ENCODE measurements at regions of chr22 and their contacts with region 1.

Region 1: DNA sequence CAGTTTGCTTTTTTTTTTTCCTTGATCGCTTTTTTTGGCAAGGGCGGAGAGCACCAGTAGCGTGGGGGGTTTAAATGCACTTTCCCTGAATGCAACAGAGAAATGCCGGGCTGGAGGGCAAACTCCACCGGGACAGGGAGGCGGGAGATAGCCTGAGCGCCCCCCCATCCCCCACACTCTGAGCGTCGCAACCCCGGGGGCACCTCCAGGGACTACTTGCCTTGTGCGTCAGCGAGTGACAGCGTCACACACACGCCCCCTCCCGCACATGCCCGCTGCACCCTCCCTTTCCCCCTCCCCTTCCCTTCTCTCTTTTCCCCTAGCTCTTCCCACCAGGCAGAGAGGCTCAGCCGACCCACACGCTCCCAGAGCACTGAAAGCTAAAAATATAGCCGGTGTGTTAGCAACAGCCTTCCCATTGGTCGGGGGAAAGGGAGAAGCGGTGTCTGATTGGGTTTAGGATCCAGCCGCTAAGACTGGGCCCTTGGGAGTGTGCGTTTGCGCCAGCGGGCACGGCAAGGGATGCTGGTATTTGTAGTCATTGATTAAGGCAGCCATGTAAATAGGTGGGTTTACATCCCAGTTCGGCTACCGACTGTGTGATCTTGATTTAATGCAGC is 1.7 kb upstream of the TOB2 start:
- DNase-seq: peak; percentile 82 to 94 (median 90)
- H3K4me3 ChIP-seq: peak overlapping the region; percentile 96
- H3K4me3 Mint-ChIP-seq: peak overlapping the region; percentile 90 to 98 (median 95)
- H3K27ac ChIP-seq: peak overlapping the region; percentile 96
- H3K27ac Mint-ChIP-seq: peak overlapping the region; percentile 91 to 98 (median 96)
- H3K4me1 ChIP-seq: peaks cover 5% of the 10 kb centered on the region
- H3K4me1 Mint-ChIP-seq: peaks cover 20 to 27% (median 23%) of the 10 kb centered on the region in 3 donors
- H3K27me3 ChIP-seq: no peaks in the 10 kb centered on the region
- H3K27me3 Mint-ChIP-seq: no peaks in the 10 kb centered on the region

Region 2: GRCh38 chr22:41320416-41321240 is 127.7 kb before region 1 on chr22:
- CTCF ChIA-PET with region 1: no interaction called
- POLR2A ChIA-PET with region 1: no interaction called
- DNase-seq: no peak
- H3K4me3 ChIP-seq: no peak overlapping the region
- H3K4me3 Mint-ChIP-seq: no peak overlapping the region
- H3K27ac ChIP-seq: no peak overlapping the region
- H3K27ac Mint-ChIP-seq: no peak overlapping the region
- H3K4me1 ChIP-seq: no peaks in the 10 kb centered on the region
- H3K4me1 Mint-ChIP-seq: peaks cover 0 to 7% (median 4%) of the 10 kb centered on the region in 3 donors
- H3K27me3 ChIP-seq: no peaks in the 10 kb centered on the region
- H3K27me3 Mint-ChIP-seq: no peaks in the 10 kb centered on the region

Region 3: DNA sequence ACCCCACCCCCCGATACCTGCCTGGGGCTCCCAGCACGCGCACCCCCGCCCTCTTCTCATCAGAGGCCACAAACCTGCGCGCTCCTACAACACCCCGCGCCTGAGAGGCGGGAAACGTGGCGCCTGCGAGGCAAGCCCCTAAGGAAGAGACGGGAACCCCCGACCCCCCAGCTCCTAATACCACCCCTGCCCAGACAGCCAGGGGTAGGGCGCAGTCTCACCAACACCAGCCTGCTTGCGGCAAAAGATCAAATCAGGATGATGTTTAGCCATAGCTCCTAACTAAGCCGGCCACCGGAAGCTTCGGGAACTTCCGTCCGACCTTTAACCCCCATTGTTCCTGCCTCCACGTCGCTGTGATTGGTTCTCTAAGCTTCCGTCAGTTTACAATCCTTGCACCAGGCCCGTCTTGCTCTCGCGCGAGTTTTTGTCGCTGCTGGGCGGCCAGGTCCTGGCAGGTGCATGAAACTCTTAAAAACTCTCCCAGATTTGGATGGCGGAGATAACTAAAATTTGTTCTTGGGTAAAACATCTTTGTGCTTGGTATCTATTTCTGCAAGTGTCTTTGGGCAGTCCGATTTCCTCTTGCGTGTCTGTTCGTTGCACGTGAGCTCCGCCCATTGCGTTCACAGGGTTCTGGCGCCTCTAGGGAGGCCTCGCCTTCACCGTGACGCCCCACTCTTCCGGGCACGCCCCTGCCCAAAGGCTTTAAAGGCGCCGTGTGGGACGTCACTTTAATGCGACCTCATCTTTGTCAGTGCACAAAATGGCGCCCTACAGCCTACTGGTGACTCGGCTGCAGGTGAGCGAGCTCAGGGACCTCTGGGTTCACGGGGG is 20.3 kb after region 1 on chr22 and contains the starts of genes ACO2 and PHF5A:
- CTCF ChIA-PET with region 1: interaction called, 10 read pairs
- POLR2A ChIA-PET with region 1: interaction called, 109 read pairs
- DNase-seq: peak; percentile 96 to 99 (median 98)
- H3K4me3 ChIP-seq: peak within 1 kb of the TSS; percentile 72
- H3K4me3 Mint-ChIP-seq: peak within 1 kb of the TSS; percentile 85 to 93 (median 89)
- H3K27ac ChIP-seq: peak within 1 kb of the TSS; percentile 99
- H3K27ac Mint-ChIP-seq: peak within 1 kb of the TSS; percentile 97 to 100 (median 99)
- H3K4me1 ChIP-seq: peaks cover 22% of the 10 kb centered on the region
- H3K4me1 Mint-ChIP-seq: peaks cover 44 to 71% (median 60%) of the 10 kb centered on the region in 3 donors
- H3K27me3 ChIP-seq: no peaks in the 10 kb centered on the region
- H3K27me3 Mint-ChIP-seq: no peaks in the 10 kb centered on the region
- total RNA-seq, gene ACO2: 112 to 114 TPM
- total RNA-seq, gene PHF5A: 120 to 125 TPM